BJ (cell line): ENCODE measurements at regions of chr1 and their contacts with region 1.

Region 1: DNA sequence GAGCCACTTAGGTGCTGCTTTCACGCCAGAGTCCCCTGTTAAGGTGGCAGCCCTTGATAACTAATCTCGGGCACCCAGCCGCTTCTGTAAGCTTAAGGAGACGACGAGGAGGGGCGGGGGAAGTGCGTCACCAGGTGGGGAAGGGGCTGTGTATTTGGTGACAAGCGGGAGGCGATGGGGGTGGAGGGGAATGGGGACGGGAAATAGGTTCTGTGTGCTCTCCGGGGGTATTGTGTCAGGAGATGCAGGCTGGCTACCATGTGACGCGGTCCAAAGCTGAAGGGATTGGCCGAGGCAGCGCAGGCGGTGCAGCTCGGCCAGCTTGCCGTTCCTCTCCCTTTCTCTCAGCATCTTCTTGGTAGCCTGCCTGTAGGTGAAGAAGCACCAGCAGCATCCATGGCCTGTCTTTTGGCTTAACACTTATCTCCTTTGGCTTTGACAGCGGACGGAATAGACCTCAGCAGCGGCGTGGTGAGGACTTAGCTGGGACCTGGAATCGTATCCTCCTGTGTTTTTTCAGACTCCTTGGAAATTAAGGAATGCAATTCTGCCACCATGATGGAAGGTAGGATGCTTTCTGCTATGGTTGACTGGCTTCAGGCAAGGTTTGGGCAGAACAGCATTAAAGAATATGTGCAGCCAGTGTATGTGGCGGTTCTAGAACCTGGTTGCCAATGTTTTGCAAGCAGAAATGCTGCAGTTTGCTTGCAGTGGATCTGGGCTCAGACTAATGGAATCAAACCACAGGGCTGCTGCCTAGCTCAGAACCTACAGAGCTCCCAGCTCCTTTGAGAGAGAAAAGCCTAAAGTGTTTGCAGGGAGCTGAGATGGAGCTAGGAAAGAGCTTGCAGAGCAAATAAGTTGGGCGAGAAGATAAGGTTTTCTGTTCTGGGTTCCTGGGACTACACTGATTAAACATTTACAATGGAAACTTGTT is at the start of gene SGIP1:
- DNase-seq: peak; percentile 38
- H3K4me3 ChIP-seq: peak within 1 kb of the TSS; percentile 55
- H3K27me3 ChIP-seq: no peaks in the 10 kb centered on the region
- CTCF ChIP-seq: no peak
- polyA plus RNA-seq, gene SGIP1: 49.4 and 62.3 TPM in 2 replicates

Region 2: DNA sequence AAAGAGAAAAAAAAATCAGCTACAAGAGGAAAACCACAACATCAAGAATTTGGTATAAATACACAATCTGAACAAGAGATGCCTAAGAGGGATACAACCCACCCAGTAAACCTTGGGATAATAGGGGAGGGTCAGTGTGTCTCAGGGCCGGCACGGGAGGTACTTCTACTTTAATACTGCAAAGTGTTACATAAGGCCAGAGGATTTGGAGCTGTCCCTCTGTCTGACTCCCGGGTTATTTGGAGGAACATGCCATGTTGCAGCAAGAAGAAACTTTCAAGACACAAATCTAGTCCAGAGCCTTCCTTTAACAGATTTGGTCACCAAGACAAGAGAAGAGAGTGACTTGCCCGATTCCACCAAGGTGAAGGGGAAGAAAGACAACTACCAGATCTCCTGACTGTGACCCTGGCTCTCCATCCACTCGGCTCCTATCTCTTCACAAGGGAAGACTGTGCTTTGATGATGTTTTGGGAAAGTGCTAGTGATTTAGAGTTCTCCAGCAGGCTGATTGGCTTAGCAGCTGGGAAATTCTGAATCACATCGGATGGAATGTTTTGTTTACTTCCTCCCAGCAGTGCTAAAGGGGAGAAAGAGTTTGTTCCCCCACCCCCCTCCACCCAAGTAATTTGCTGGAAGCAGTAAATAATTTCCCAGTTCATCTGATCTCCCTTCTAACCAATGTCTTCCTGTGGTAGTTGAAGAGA is 29.2 kb after region 1 on chr1:
- CTCF ChIA-PET with region 1: no interaction called
- POLR2A ChIA-PET with region 1: no interaction called
- DNase-seq: peak; percentile 90
- H3K4me3 ChIP-seq: peak overlapping the region; percentile 34
- H3K27me3 ChIP-seq: no peaks in the 10 kb centered on the region
- CTCF ChIP-seq: no peak

Region 3: DNA sequence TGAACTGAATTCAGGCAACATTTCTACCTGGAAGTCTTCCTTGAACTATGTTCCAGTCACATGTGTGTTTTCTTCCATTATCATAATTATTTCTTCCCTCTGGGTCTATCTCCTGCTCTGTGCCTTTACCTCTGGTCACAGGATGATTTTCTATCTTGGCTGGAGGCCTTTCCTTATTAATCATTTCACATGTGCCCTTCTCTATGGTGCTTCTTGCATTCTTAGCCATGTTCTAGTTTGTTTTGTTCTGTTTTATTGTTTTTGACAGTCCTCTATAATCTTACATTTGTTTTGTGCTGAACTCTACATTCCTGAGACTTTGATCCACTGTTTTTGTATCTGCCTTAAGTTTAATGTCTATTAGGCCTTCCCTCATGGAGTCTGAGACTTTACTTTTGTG is 50.9 kb after region 1 on chr1:
- CTCF ChIA-PET with region 1: no interaction called
- POLR2A ChIA-PET with region 1: interaction called, 17 read pairs
- DNase-seq: no peak
- H3K4me3 ChIP-seq: no peak overlapping the region
- H3K27me3 ChIP-seq: no peaks in the 10 kb centered on the region
- CTCF ChIP-seq: no peak

Region 4: GRCh38 chr1:66725885-66726665 is 192.0 kb after region 1 on chr1:
- CTCF ChIA-PET with region 1: interaction called, 14 read pairs
- POLR2A ChIA-PET with region 1: no interaction called
- DNase-seq: no peak
- H3K4me3 ChIP-seq: no peak overlapping the region
- H3K27me3 ChIP-seq: no peaks in the 10 kb centered on the region
- CTCF ChIP-seq: peak; percentile 99

Region 5: DNA sequence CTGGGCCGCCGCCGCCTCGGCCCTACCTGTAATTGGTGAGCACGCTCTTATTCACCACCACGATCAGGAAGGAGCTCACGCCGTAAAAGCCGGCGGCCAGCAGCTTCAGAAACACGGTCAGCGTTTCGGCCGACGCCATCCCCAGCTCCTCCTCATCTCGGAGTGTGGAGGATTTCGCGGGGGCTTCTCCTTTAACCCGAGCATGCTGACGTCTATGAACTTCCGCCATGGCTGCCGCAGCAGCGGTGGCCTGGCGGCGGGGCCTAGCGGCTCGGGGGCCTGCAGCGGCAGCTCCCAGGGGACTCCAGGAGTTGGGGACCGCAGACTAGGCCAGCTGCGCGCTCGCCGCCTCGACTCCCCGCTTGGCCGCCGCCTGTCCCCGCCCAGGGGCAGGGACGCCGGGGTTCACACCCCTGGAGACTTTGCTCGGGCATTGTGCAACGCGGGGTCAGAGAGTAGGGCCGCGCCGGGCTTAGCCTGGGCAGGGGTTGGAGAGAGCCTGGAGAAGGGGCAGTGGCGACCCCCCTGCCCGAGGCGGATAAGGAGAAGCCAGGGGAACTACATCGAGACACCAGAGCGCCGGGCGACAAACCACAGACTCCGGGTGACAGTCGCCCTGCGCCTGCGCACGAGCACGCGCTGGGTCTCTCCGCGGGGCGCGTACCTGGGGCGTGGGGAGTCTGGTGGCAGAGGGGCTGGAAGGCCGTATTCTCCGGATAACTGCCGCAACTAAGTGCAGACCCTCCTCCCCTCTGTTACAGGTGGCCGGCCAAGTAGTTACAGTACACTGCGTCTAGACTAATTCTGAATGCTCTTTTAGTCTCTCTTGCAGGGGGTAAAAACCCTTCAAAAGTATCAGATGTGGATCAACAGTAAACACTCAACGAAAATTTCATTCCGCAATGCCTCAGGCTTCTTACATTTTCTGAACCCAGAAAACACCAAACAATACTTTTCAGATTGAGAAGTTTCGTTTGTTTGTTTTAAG is 520.0 kb after region 1 on chr1 and contains the start of gene SLC35D1:
- CTCF ChIA-PET with region 1: no interaction called
- POLR2A ChIA-PET with region 1: interaction called, 15 read pairs
- DNase-seq: no peak
- H3K4me3 ChIP-seq: peak within 1 kb of the TSS; percentile 86
- H3K27me3 ChIP-seq: no peaks in the 10 kb centered on the region
- CTCF ChIP-seq: no peak
- polyA plus RNA-seq, gene SLC35D1: 9.0 and 15.8 TPM in 2 replicates